GM12878 (cell line): ENCODE measurements at regions of chr9 and their contacts with region 1.

Region 1: DNA sequence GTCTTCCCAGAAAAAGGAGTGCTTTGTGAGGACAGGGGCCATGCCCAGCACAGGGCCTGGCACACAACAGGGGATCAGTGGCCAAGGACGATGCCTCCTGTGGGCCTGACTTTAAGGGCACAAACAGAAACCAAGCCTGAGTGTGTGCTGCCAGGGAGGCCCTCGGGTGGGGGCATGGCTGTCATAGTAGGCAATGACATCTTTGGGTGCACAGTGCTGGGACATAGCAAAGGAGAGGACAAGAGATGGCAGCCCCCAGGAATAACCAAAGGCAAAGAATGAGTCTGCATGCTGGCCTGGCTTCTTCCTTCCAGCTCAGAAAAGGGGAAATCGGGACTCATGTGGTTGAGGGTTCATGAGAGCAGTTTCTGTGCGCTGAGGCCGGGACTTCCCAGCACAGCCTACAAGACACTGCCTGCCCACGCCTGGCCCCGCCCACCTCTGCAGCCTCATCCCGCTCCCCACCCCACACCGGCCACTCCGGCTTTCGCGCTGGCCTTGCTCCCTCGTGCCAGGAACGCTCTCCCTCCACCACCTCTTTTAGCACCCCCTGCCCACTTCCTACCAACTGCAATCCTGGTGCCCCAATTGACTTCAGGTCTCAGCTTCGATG is 13.8 kb upstream of the LHX2 start:
- DNase-seq: peak; percentile 81
- ATAC-seq: peak; percentile 79
- H3K4me3 ChIP-seq: peak overlapping the region; percentile 50; the same call in 1 of the 2 replicates
- H3K27ac ChIP-seq: peak overlapping the region; percentile 85
- H3K4me1 ChIP-seq: peaks cover 30% of the 10 kb centered on the region
- H3K27me3 ChIP-seq: peaks cover 0 to 25% of the 10 kb centered on the region in 2 experiments; a peak in 1 of 4 replicates
- CTCF ChIP-seq: no peak
- EP300 ChIP-seq: peak; percentile 24 to 61; a peak in 1 of 4 replicates
- POLR2A ChIP-seq: no peak
- RAD21 ChIP-seq: no peak

Region 2: GRCh38 chr9:123679322-123679987 is 318.3 kb before region 1 on chr9:
- CTCF ChIA-PET with region 1: interaction called, 3 read pairs
- POLR2A ChIA-PET with region 1: no interaction called
- RAD21 ChIA-PET with region 1: interaction called, 10 read pairs
- SMC1A ChIA-PET with region 1: interaction called, 6 read pairs
- in situ Hi-C with region 1: no loop called
- intact Hi-C with region 1: no loop called
- DNase-seq: peak; percentile 95
- ATAC-seq: peak; percentile 97
- H3K4me3 ChIP-seq: no peak overlapping the region
- H3K27ac ChIP-seq: peak overlapping the region; percentile 72
- H3K4me1 ChIP-seq: peaks cover 31% of the 10 kb centered on the region
- H3K27me3 ChIP-seq: no peaks in the 10 kb centered on the region
- CTCF ChIP-seq: no peak
- EP300 ChIP-seq: peak in 1 of 2 experiments; percentile 82; a peak in 3 of 4 replicates
- POLR2A ChIP-seq: peak; percentile 60; the same call in 1 of the 2 replicates
- RAD21 ChIP-seq: peak; percentile 21; the same call in 1 of the 2 replicates

Region 3: GRCh38 chr9:123848447-123849085 is 149.2 kb before region 1 on chr9:
- CTCF ChIA-PET with region 1: no interaction called
- POLR2A ChIA-PET with region 1: no interaction called
- RAD21 ChIA-PET with region 1: no interaction called
- SMC1A ChIA-PET with region 1: no interaction called
- in situ Hi-C with region 1: no loop called
- intact Hi-C with region 1: no loop called
- DNase-seq: no peak
- ATAC-seq: no peak
- H3K4me3 ChIP-seq: no peak overlapping the region
- H3K27ac ChIP-seq: no peak overlapping the region
- H3K4me1 ChIP-seq: no peaks in the 10 kb centered on the region
- H3K27me3 ChIP-seq: no peaks in the 10 kb centered on the region
- CTCF ChIP-seq: no peak
- EP300 ChIP-seq: no peak
- POLR2A ChIP-seq: no peak
- RAD21 ChIP-seq: no peak

Region 4: DNA sequence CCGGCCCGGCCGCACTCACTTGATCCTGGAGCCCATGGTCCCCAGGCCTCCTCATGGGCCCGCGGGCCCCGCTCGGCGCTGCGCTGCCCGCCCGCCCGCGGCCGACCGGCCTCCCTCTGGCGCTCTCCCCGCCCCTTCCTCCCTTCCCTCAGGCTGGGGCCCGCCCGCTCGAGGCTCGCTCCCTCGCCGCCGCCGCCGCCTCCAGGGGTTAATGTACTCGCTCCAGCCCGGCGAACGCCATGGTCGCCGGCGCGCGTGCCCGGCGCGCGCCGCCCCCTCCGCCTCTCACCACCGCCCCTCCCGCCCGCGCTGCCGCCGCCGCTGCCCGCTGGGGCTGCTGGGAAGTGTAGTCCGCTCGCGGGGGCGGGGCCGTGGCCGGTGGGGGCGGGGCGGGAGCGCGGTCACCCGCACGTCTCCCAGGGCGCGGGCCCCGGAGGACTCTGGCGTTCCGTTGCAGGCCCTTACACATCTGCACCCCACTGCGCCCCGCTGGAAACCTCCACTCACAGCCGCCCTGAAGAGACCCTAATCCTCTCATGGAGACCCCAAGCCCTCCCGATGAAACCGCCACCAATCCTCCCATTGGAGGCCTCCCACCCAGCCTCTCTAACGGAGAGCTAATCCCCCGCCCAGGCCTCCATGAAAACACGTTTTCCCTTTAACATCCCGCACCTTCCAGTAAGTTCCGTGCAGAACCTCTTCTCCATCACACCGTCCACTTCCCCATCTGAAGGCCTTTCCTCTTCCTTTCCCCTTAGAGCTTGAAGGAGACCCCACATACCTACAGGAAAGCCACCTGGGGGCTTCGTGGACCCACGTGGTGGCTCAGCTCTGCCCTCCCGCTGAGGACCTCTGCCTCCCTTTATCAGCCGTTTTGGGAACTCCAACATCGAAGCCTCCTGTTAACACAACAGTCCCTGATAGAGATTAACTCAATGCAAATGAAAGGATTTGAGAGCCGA is 67.6 kb before region 1 on chr9 and contains the start of gene DENND1A:
- CTCF ChIA-PET with region 1: interaction called, 4 read pairs
- POLR2A ChIA-PET with region 1: interaction called, 3 read pairs
- RAD21 ChIA-PET with region 1: interaction called, 13 read pairs
- SMC1A ChIA-PET with region 1: interaction called, 15 read pairs
- in situ Hi-C with region 1: no loop called
- intact Hi-C with region 1: loop called (anchors 5 kb)
- DNase-seq: no peak
- ATAC-seq: peak; percentile 83
- H3K4me3 ChIP-seq: peak within 1 kb of the TSS; percentile 85
- H3K27ac ChIP-seq: peak within 1 kb of the TSS; percentile 79
- H3K4me1 ChIP-seq: peaks cover 18% of the 10 kb centered on the region
- H3K27me3 ChIP-seq: no peaks in the 10 kb centered on the region
- CTCF ChIP-seq: no peak
- EP300 ChIP-seq: no peak
- POLR2A ChIP-seq: peak; percentile 71; the same call in 1 of the 2 replicates
- RAD21 ChIP-seq: no peak
- polyA plus RNA-seq, gene DENND1A: 14.1 to 19.1 TPM

Region 5: GRCh38 chr9:123954518-123955280 is 43.1 kb before region 1 on chr9:
- CTCF ChIA-PET with region 1: interaction called, 11 read pairs
- POLR2A ChIA-PET with region 1: interaction called, 5 read pairs
- RAD21 ChIA-PET with region 1: interaction called, 20 read pairs
- SMC1A ChIA-PET with region 1: interaction called, 13 read pairs
- in situ Hi-C with region 1: no loop called
- intact Hi-C with region 1: no loop called
- DNase-seq: no peak
- ATAC-seq: no peak
- H3K4me3 ChIP-seq: no peak overlapping the region
- H3K27ac ChIP-seq: no peak overlapping the region
- H3K4me1 ChIP-seq: peaks cover 5% of the 10 kb centered on the region
- H3K27me3 ChIP-seq: no peaks in the 10 kb centered on the region
- CTCF ChIP-seq: no peak
- EP300 ChIP-seq: no peak
- POLR2A ChIP-seq: no peak
- RAD21 ChIP-seq: no peak

Region 6: DNA sequence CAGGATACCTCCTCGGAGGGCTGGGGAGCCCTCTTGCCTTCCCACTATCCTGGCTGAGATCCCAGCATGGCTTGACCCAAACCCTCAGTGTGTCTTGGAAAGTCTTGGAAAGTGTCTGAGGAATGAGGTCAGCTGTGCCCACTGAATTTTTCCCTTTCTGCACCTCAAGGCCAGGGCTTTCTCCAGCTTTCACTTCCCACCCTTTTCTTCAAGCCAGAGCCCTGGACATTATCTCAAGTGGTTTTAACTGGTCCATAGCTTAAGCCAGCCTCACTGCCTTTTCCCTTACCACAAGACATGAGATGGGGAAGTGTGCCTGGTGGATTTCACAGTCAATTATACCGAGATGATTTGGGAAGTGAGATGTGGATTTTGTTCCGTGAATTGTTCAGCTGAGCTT is 21.9 kb before region 1 on chr9:
- CTCF ChIA-PET with region 1: no interaction called
- POLR2A ChIA-PET with region 1: interaction called, 7 read pairs
- RAD21 ChIA-PET with region 1: interaction called, 5 read pairs
- SMC1A ChIA-PET with region 1: interaction called, 3 read pairs
- in situ Hi-C with region 1: no loop called
- intact Hi-C with region 1: loop called (anchors 2 kb)
- DNase-seq: no peak
- ATAC-seq: no peak
- H3K4me3 ChIP-seq: no peak overlapping the region
- H3K27ac ChIP-seq: no peak overlapping the region
- H3K4me1 ChIP-seq: no peaks in the 10 kb centered on the region
- H3K27me3 ChIP-seq: no peaks in the 10 kb centered on the region
- CTCF ChIP-seq: no peak
- EP300 ChIP-seq: no peak
- POLR2A ChIP-seq: no peak
- RAD21 ChIP-seq: no peak